Tibial artery (tissue), 4 donors: ENCODE measurements at regions of chr3 and their contacts with region 1.

Region 1: GRCh38 chr3:98817547-98818041 is 54.5 kb downstream of the ST3GAL6 start:
- DNase-seq: no peak
- H3K4me3 ChIP-seq: no peak overlapping the region
- H3K27ac ChIP-seq: no peak overlapping the region
- H3K4me1 ChIP-seq: no peaks in the 10 kb centered on the region
- H3K27me3 ChIP-seq: no peaks in the 10 kb centered on the region
- CTCF ChIP-seq: peak; percentile 79 to 86

Region 2: GRCh38 chr3:98602078-98602678 is 215.4 kb before region 1 on chr3:
- intact Hi-C with region 1: loop called (anchors 2 kb)
- DNase-seq: peak in 1 of 2 donors; percentile 23
- H3K4me3 ChIP-seq: no peak overlapping the region
- H3K27ac ChIP-seq: no peak overlapping the region
- H3K4me1 ChIP-seq: no peaks in the 10 kb centered on the region
- H3K27me3 ChIP-seq: no peaks in the 10 kb centered on the region
- CTCF ChIP-seq: peak; percentile 76 to 81

Region 3: DNA sequence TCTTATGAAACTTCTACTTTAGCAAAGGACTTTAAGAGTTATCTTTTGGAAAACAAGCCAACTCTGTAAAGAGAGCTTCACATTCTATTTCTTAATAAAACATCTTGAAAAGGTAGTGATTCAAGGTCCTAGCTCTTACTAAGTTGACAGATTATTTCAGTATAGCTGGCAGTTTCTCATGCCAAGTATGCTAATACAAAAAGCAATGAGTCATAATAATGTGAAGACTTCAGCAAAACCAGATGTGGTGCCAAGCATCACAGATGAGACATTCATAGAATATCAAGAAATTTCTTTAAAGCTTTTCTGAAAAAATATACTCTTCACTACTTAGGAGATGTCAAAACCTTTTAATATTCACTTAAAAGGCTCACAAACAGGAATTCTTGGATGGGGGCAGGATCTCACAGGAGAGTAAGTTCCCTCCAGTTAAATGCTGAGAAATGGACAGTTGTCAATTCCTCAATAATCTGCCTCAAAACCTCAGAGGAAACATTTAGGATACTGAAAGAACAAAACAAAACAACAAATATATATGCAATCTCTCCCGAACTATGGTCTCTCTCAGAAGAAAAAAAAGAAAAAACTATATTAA is 38.3 kb after region 1 on chr3:
- intact Hi-C with region 1: no loop called
- DNase-seq: no peak
- H3K4me3 ChIP-seq: no peak overlapping the region
- H3K27ac ChIP-seq: peak overlapping the region in 1 of 2 donors; percentile 24
- H3K4me1 ChIP-seq: peaks cover 0 to 14% (median 2%) of the 10 kb centered on the region in 4 donors
- H3K27me3 ChIP-seq: no peaks in the 10 kb centered on the region
- CTCF ChIP-seq: no peak

Region 4: GRCh38 chr3:98994128-98994762 is 176.7 kb after region 1 on chr3:
- intact Hi-C with region 1: loop called (anchors 2 kb)
- DNase-seq: no peak
- H3K4me3 ChIP-seq: no peak overlapping the region
- H3K27ac ChIP-seq: no peak overlapping the region
- H3K4me1 ChIP-seq: no peaks in the 10 kb centered on the region
- H3K27me3 ChIP-seq: no peaks in the 10 kb centered on the region
- CTCF ChIP-seq: peak; percentile 75 to 85